Left ventricle myocardium superior (tissue), 1 donor: ENCODE measurements at regions of chr7 and their contacts with region 1.

Region 1: DNA sequence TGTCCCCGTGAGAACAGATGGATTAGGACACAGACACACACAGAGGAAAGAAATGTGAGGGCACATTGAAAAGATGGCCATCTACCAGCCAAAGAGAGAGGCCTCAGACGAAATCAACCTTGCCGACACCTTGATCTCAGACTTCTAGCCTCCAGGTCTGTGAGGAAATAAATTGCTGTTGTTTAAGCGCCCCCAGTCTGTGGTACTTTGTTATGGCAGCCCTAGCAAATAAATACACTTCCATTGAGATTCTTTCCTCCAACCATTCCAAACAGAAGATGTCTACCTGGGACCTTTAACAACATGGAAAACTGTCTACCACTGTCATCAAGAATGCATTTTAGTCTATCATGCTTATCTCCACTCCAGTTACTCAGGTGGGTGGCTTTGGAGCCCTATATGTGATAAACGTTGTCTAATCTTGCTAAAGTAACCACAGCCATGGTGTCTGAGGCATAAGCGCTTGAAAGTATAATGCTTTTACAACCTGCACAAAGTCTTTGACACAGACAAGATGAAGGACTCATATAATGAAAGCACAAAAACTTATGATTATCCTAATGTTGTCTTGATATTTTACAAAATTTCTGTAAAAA is 244.3 kb downstream of the MTERF1 start:
- DNase-seq: no peak
- ATAC-seq: peak; percentile 32

Region 2: DNA sequence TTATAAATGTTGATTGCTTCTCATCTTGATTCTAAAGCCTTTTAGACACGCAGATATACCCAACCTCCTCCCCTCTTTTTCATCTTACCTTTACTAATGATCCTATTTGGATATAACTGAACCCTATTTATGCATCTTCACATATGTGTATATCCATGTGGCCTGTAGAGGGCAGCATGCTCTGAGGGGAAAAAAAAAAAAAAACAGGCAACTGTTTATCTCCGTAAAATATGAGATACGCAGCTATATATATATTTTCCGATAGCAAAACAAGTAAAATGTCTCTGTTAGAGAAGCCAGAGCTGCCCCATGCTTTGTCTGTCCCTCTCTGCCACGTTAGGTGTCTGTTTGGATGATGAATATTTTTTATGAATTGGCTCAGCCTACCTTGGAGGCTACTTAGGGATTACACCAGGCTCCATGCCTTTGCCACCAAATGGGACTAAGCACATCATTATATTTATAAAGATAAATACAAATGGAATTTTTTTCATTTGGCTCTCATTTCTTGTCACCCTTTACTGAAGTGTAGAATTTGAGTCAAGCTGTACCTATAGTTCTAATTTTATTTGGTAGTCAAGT is 546.8 kb before region 1 on chr7:
- intact Hi-C with region 1: loop called (anchors 10 kb)
- DNase-seq: no peak
- ATAC-seq: peak; percentile 70

Region 3: DNA sequence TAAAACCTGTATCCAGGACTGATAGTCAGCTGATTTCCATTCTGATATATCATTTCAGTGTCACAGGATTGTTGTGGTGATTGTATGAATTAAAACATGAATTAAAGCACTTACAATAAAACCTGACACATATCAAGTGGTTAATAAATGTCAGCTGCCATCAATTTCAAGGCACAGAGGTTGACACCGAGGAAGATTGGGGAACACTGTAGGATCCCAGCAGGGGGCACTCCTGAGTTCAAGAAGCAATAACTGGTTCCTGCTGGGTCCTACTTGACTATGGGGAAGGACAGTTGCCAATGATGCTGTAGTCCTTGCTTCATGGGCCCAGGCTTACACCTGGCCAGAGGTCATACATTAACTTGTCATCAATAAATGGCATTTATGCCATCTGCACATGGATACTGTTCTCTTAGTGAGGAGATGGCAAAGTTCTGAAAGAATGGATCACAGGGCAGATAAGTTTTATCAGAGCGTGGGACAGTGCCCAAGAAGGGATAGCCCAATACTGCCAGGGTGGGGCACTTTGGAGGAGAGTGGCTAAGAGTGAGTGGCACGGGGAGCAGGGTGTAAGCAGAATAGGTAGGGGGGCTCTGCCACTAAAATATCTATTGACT is 347.9 kb before region 1 on chr7:
- intact Hi-C with region 1: loop called (anchors 10 kb)
- DNase-seq: peak; percentile 51
- ATAC-seq: peak; percentile 57